IMR-90 (cell line): ENCODE measurements at regions of chr2 and their contacts with region 1.

Region 1: DNA sequence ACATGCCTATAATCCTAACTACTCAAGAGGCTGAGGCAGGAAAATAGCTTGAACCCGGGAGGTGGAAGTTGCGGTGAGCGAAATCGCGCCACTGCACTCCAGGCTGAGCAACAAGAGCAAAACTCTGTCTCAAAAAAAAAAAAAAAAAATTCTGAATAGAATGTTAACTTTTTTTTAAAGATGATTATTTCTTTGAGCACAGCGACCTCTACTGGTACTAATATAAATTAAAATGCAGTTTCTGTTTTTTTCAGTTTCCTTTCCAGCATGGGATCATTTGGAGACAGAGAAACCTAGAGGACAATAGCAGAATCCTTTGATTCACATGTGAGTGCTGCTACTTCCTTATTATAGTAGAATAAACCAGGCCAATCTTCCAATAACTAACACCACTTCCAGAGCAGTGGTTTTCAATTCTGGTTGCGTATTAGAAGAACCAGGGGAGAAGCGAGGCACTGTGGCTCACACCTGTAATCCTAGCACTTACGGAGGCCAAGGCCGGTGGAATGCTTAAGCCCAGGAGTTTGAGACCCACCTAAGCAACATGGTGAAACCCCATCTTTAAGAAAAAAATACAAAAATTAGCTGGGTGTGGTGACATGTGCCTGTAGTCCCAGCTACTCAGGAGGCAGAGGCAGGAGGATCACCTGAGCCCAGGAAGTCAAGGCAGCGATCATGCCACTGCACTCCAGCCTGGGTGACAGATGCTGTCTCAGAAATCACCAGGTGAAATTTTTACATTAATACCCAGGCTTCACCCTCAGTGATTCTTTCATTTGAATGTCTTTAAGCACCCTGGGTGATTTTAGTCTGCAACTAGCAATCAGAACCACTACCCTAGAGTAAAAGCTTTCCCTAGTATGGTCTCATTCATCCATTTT is 10.1 kb downstream of the SRSF7 start:
- DNase-seq: peak; percentile 53
- ATAC-seq: peak; percentile 55; the same call in 1 of the 2 replicates
- H3K4me3 ChIP-seq: no peak overlapping the region
- H3K27ac ChIP-seq: no peak overlapping the region
- H3K4me1 ChIP-seq: no peaks in the 10 kb centered on the region; the same call in 1 of the 2 replicates
- H3K27me3 ChIP-seq: no peaks in the 10 kb centered on the region
- CTCF ChIP-seq: peak; percentile 56
- POLR2A ChIP-seq: no peak
- RAD21 ChIP-seq: peak; percentile 49

Region 2: GRCh38 chr2:37005118-37005868 is 1735.8 kb before region 1 on chr2:
- CTCF ChIA-PET with region 1: no interaction called
- POLR2A ChIA-PET with region 1: interaction called, 10 read pairs
- dilution Hi-C with region 1: no loop called
- in situ Hi-C with region 1: no loop called
- intact Hi-C with region 1: no loop called
- DNase-seq: peak; percentile 23
- ATAC-seq: no peak
- H3K4me3 ChIP-seq: no peak overlapping the region
- H3K27ac ChIP-seq: no peak overlapping the region
- H3K4me1 ChIP-seq: peaks cover 2% of the 10 kb centered on the region; the same call in 1 of the 2 replicates
- H3K27me3 ChIP-seq: no peaks in the 10 kb centered on the region
- CTCF ChIP-seq: 0 out of 2 replicates have a peak, but pooled peaks have one; percentile 21
- POLR2A ChIP-seq: no peak
- RAD21 ChIP-seq: peak; percentile 36

Region 3: GRCh38 chr2:38535744-38536506 is 205.2 kb before region 1 on chr2:
- CTCF ChIA-PET with region 1: interaction called, 5 read pairs
- POLR2A ChIA-PET with region 1: interaction called, 4 read pairs
- dilution Hi-C with region 1: no loop called
- in situ Hi-C with region 1: no loop called
- intact Hi-C with region 1: loop called (anchors 1 kb)
- DNase-seq: peak; percentile 46
- ATAC-seq: peak; percentile 94
- H3K4me3 ChIP-seq: peak overlapping the region; percentile 51
- H3K27ac ChIP-seq: no peak overlapping the region; the same call in 1 of the 2 replicates
- H3K4me1 ChIP-seq: no peaks in the 10 kb centered on the region
- H3K27me3 ChIP-seq: peaks cover 10% of the 10 kb centered on the region; the same call in 1 of the 2 replicates
- CTCF ChIP-seq: peak; percentile 80
- POLR2A ChIP-seq: no peak
- RAD21 ChIP-seq: peak; percentile 71

Region 4: GRCh38 chr2:38554973-38555595 is 186.0 kb before region 1 on chr2:
- CTCF ChIA-PET with region 1: no interaction called
- POLR2A ChIA-PET with region 1: no interaction called
- dilution Hi-C with region 1: loop called (anchors 25 kb)
- in situ Hi-C with region 1: no loop called
- intact Hi-C with region 1: no loop called
- DNase-seq: peak; percentile 33
- ATAC-seq: peak; percentile 70
- H3K4me3 ChIP-seq: no peak overlapping the region
- H3K27ac ChIP-seq: no peak overlapping the region
- H3K4me1 ChIP-seq: no peaks in the 10 kb centered on the region
- H3K27me3 ChIP-seq: no peaks in the 10 kb centered on the region
- CTCF ChIP-seq: peak; percentile 46
- POLR2A ChIP-seq: no peak
- RAD21 ChIP-seq: no peak; the same call in 1 of the 2 replicates

Region 5: GRCh38 chr2:38581193-38582147 is 159.6 kb before region 1 on chr2:
- CTCF ChIA-PET with region 1: interaction called, 4 read pairs
- POLR2A ChIA-PET with region 1: no interaction called
- dilution Hi-C with region 1: no loop called
- in situ Hi-C with region 1: no loop called
- intact Hi-C with region 1: loop called (anchors 5 kb)
- DNase-seq: peak; percentile 82
- ATAC-seq: peak; percentile 75
- H3K4me3 ChIP-seq: no peak overlapping the region
- H3K27ac ChIP-seq: no peak overlapping the region
- H3K4me1 ChIP-seq: peaks cover 5% of the 10 kb centered on the region
- H3K27me3 ChIP-seq: no peaks in the 10 kb centered on the region
- CTCF ChIP-seq: peak; percentile 79
- POLR2A ChIP-seq: no peak
- RAD21 ChIP-seq: peak; percentile 83